PC-9 (cell line): ENCODE measurements at regions of chr2 and their contacts with region 1.

Region 1: GRCh38 chr2:157777427-157777826 is 98.7 kb downstream of the ACVR1 start:
- DNase-seq: peak in 1 of 2 experiments; percentile 19
- H3K4me3 ChIP-seq: no peak overlapping the region
- H3K27ac ChIP-seq: no peak overlapping the region
- H3K4me1 ChIP-seq: no peaks in the 10 kb centered on the region
- H3K27me3 ChIP-seq: no peaks in the 10 kb centered on the region
- CTCF ChIP-seq: peak; percentile 72

Region 2: DNA sequence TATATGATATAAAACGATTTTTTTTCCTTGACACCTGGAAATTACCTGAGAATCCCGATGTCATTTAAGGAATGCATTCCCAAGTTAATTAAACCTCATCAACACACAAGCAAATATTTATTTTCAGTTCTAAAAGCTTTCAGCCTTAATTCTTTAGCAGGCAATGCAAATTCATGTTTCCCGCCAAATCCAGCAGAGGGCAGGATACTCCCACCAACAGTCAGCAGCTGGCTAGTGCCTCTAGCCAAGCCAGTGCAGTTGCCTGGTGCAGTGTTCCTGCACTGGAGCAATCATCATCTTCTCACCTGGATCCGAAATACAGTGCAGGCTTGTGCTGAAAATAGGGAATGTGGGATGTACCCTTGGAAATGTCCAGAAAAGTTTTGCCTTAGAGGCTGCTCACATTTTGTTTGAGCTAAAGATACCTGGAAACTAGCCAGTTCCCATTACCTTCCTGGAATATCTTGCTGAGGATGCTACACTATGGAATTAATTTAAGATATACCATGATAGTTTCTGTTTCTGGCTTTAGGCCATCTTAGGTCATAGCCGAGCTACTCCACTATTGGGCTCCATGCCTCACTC is 285.1 kb before region 1 on chr2:
- CTCF ChIA-PET with region 1: no interaction called
- POLR2A ChIA-PET with region 1: no interaction called
- intact Hi-C with region 1: loop called (anchors 10 kb)
- DNase-seq: peak in 1 of 2 experiments; percentile 41
- H3K4me3 ChIP-seq: no peak overlapping the region
- H3K27ac ChIP-seq: no peak overlapping the region
- H3K4me1 ChIP-seq: no peaks in the 10 kb centered on the region
- H3K27me3 ChIP-seq: no peaks in the 10 kb centered on the region
- CTCF ChIP-seq: peak; percentile 68

Region 3: DNA sequence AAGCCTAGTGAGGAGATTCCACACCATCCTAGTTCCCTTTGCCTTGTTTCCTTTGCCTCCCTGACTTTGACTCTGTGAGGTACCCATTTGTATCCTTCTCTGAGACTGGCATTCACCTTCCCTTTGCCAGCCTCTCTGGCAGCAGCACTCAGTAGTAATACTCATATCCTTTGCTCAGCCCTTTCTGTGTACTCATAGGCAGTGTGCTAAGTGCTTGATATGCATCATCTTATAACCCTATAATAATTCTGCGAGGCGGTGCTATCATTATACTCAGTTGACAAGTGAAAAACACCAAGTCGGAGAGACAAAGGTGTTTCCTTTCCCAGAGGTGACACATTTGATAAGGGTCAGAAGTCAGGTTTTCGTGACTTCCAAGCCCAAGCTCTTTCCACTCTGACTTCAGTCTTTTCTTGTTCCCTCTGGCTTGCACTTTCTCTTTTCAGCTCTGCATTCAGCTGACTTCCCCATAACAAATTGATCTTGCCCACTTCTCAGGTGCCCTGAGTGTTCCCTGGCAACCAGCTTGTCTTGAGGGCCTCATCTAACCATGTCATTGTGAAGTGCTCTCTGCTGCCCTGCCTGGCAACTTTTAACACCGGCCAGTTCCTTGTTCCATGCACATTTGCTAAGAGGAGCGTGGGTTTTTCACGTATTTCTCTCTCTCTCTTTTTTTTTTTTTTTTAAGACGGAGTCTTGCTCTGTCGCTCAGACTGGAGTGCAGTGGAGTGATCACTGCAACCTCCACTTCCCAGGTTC is 229.7 kb after region 1 on chr2:
- CTCF ChIA-PET with region 1: no interaction called
- POLR2A ChIA-PET with region 1: no interaction called
- intact Hi-C with region 1: loop called (anchors 2 kb)
- DNase-seq: no peak
- H3K4me3 ChIP-seq: no peak overlapping the region
- H3K27ac ChIP-seq: no peak overlapping the region
- H3K4me1 ChIP-seq: peaks cover 11% of the 10 kb centered on the region
- H3K27me3 ChIP-seq: no peaks in the 10 kb centered on the region
- CTCF ChIP-seq: no peak

Region 4: GRCh38 chr2:158637357-158637756 is 859.9 kb after region 1 on chr2:
- CTCF ChIA-PET with region 1: no interaction called
- POLR2A ChIA-PET with region 1: interaction called, 16 read pairs
- intact Hi-C with region 1: no loop called
- DNase-seq: no peak
- H3K4me3 ChIP-seq: no peak overlapping the region
- H3K27ac ChIP-seq: no peak overlapping the region
- H3K4me1 ChIP-seq: no peaks in the 10 kb centered on the region
- H3K27me3 ChIP-seq: no peaks in the 10 kb centered on the region
- CTCF ChIP-seq: no peak

Region 5: DNA sequence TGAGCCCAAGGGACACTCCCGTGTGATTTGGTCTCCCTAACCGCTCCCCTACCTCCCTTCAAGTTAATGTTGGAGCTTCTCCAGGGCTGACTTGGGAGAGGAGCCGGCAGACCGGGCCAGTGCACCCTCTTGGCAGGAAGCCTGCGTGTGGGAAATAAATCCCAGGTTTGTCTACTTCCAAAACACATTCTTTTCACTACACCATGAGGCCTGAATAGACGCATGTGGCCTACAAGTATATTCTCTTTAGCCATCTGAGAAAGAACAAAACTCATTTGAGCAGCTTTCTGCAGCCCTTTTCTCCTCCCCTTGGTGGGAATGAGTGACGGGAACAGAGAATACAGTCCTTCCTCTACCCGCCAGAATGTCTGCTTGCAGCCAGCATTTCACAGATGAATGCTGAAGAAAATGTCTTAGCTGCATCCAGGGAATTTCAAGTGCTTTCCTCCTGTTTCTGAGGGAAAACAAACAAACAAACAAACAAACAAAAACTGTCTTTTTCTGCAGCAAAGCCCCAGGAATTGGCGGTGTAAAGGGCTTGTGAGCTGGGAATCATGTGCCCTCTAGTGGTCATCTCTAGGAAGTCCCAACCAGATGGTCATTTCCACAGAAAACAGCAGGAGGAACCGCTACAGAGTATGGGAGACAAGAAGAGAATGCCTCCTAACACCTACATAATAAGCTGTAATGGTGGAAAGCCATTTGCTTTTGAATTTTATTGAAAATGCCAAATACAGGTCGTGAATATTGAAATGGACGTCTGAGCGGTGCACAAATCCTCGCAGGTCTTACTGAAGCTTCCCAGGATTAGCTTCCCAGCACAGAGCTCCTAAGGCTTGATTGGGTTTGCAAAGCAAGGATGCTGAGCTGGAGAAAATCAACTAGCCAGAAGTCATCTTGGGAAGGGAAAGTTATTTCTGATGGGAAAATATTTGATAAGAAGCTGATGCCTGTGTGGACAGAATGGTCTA is 976.5 kb after region 1 on chr2:
- CTCF ChIA-PET with region 1: no interaction called
- POLR2A ChIA-PET with region 1: no interaction called
- intact Hi-C with region 1: loop called (anchors 5 kb)
- DNase-seq: peak in 1 of 2 experiments; percentile 20
- H3K4me3 ChIP-seq: no peak overlapping the region
- H3K27ac ChIP-seq: no peak overlapping the region
- H3K4me1 ChIP-seq: no peaks in the 10 kb centered on the region
- H3K27me3 ChIP-seq: no peaks in the 10 kb centered on the region
- CTCF ChIP-seq: peak; percentile 88